Panc1 (cell line): ENCODE measurements at regions of chr7 and their contacts with region 1.

Region 1: DNA sequence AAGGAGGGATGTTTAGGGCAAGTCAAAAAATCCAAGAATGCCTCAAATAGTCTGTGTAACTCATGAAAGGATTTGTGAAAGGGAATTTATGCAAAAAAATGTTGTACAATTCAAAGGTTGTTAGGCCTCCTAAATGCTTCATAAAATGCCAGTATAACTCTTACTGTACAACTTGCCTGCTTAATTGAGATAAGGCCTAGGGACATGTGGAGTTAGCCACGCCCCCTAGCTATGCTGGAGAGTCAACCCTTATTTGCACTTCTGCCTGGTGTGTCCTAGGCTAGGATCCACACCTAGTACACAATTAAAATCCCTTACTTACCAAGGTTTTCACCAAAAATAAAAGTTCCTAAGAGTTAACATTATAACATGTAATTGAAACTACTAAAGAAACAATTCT is 77.2 kb downstream of the ZNF680 start:
- DNase-seq: no peak
- ATAC-seq: no peak
- H3K4me3 ChIP-seq: no peak overlapping the region
- H3K27ac ChIP-seq: no peak overlapping the region
- H3K4me1 ChIP-seq: no peaks in the 10 kb centered on the region
- H3K27me3 ChIP-seq: no peaks in the 10 kb centered on the region
- CTCF ChIP-seq: no peak

Region 2: GRCh38 chr7:64433590-64433989 is 52.0 kb before region 1 on chr7:
- CTCF ChIA-PET with region 1: no interaction called
- POLR2A ChIA-PET with region 1: no interaction called
- in situ Hi-C with region 1: no loop called
- intact Hi-C with region 1: loop called (anchors 10 kb)
- DNase-seq: no peak
- ATAC-seq: no peak
- H3K4me3 ChIP-seq: no peak overlapping the region
- H3K27ac ChIP-seq: no peak overlapping the region
- H3K4me1 ChIP-seq: no peaks in the 10 kb centered on the region
- H3K27me3 ChIP-seq: no peaks in the 10 kb centered on the region
- CTCF ChIP-seq: no peak

Region 3: DNA sequence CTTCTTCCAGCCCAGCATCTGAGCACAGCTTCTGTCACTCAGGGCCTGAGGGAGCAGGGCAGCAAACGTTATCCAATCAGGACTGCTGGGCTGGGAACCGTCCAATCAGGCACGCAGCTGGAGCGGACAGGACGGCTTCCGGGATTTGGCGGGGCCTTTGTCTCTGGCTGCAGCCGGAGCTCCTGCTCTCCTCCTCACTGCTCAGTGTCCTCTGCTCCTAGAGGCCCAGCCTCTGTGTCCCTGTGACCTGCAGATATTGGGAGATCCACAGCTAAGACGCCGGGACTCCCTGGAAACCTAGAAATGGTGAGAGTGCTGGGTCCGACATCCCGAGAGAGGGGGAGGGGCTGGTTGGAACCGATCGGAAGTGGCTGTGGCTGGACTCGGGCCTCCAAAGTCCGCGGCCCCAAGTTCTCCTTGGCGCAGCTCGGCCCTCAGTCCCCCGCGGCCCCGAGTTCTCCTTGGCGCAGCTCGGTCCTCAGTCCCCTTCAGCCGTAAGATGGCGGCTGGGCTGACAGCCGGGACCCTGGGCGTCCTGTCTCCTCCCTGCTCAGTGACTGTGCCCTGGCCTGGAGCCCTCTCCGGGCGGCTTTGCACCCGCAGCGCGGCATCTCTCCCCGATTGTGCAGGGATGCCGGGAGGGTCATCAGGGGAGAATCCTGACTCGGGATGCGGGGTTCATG is 180.5 kb after region 1 on chr7 and contains the start of gene ZNF107:
- CTCF ChIA-PET with region 1: no interaction called
- POLR2A ChIA-PET with region 1: no interaction called
- in situ Hi-C with region 1: no loop called
- intact Hi-C with region 1: no loop called
- DNase-seq: peak; percentile 90
- ATAC-seq: peak; percentile 99
- H3K4me3 ChIP-seq: peak within 1 kb of the TSS; percentile 94 to 98
- H3K27ac ChIP-seq: peak within 1 kb of the TSS; percentile 90
- H3K4me1 ChIP-seq: peaks cover 9% of the 10 kb centered on the region; the same call in 1 of the 2 replicates
- H3K27me3 ChIP-seq: no peaks in the 10 kb centered on the region
- CTCF ChIP-seq: no peak
- total RNA-seq, gene ZNF107: 11.1 TPM